MCF 10A (cell line): ENCODE measurements at regions of chr1 and their contacts with region 1.

Region 1: DNA sequence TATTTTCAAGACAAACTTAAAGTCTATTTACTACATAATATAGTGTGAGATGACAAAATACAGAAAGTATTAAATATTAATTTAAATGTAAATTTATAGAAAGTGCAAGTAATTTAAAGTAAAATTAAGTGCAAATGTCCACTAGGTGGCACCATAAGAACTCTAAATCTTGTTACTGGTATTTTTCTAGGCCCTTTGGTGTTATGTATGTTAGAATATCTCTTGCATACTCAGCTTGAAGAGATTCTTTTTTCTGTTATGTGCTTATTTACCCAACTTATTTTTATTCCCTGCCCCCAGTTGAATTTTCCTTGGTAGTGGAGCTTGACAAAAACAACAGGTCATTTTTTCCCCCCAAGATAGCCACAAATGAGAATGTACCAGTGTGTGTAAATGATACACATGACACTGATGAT is 71.5 kb downstream of the RPS6KC1 start:
- DNase-seq: peak; percentile 75
- H3K4me3 Mint-ChIP-seq: no peak overlapping the region
- H3K27ac Mint-ChIP-seq: peak overlapping the region; percentile 61
- H3K4me1 Mint-ChIP-seq: peaks cover 26% of the 10 kb centered on the region
- H3K27me3 Mint-ChIP-seq: no peaks in the 10 kb centered on the region
- CTCF ChIP-seq: peak; percentile 74

Region 2: GRCh38 chr1:213110349-213111300 is 11.9 kb before region 1 on chr1:
- CTCF ChIA-PET with region 1: interaction called, 93 read pairs
- POLR2A ChIA-PET with region 1: interaction called, 4 read pairs
- intact Hi-C with region 1: no loop called
- DNase-seq: no peak
- H3K4me3 Mint-ChIP-seq: no peak overlapping the region
- H3K27ac Mint-ChIP-seq: no peak overlapping the region
- H3K4me1 Mint-ChIP-seq: peaks cover 5% of the 10 kb centered on the region
- H3K27me3 Mint-ChIP-seq: no peaks in the 10 kb centered on the region
- CTCF ChIP-seq: no peak

Region 3: DNA sequence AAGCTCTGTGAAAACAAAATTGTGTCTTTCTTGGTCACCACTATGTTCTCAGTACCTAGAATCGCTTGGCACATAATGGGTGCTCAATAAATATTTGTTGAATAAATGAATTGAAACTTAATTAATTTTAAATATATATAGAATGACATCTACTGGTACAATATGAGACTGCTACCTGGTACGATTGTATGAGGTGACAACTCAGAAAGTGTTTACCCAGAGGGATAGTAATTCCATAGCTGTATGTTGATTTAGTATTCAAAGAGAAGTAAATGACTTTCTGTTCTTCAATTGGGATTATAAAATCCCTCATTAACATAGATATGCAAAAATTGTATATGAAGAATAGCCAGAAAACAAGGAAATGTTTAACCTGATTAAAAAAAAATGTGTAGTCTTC is 57.3 kb after region 1 on chr1:
- CTCF ChIA-PET with region 1: interaction called, 11 read pairs
- POLR2A ChIA-PET with region 1: no interaction called
- intact Hi-C with region 1: no loop called
- DNase-seq: no peak
- H3K4me3 Mint-ChIP-seq: no peak overlapping the region
- H3K27ac Mint-ChIP-seq: no peak overlapping the region
- H3K4me1 Mint-ChIP-seq: no peaks in the 10 kb centered on the region
- H3K27me3 Mint-ChIP-seq: no peaks in the 10 kb centered on the region
- CTCF ChIP-seq: no peak

Region 4: DNA sequence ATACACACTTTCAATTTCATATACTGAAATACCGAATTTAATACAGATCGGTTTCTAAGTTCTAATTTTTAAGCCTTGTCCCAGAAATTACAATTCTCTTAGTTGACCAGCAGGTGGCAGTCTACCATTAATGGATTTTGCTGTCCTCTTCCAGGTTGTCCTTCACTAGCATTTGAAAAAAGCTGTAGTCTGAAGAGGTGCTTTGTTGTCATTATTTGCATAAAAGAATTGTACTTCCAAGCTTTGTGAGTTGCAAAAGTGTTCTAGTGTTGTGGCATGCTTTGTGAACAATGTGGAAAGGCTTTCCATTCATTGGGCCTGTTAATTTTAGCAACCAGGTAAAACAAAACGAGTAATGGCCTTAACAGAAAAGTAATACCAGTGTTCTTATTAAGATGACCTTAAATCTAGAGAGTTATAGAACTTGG is 122.2 kb after region 1 on chr1:
- CTCF ChIA-PET with region 1: interaction called, 18 read pairs
- POLR2A ChIA-PET with region 1: interaction called, 4 read pairs
- intact Hi-C with region 1: loop called (anchors 2 kb)
- DNase-seq: peak; percentile 88
- H3K4me3 Mint-ChIP-seq: no peak overlapping the region
- H3K27ac Mint-ChIP-seq: peak overlapping the region; percentile 17
- H3K4me1 Mint-ChIP-seq: no peaks in the 10 kb centered on the region
- H3K27me3 Mint-ChIP-seq: no peaks in the 10 kb centered on the region
- CTCF ChIP-seq: peak; percentile 97

Region 5: DNA sequence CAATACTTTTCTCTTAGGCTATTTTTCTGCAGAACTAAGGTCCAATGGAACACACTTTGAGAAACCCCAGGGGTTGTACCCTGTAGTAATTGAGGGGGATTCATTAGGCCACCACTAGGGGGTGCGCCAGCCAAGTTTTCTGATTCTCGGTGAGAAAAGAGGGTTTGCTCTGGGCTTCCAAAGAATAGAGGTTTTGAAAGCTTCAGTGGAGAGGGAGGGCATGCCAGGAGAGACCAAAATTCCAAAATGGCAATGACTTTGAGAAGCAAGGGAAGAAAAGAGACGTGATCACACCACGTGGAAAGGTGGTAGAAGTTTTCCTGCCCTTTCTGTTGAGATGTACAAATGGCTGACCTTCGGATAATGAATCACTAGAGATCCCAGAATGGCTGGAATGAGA is 251.8 kb after region 1 on chr1:
- CTCF ChIA-PET with region 1: interaction called, 24 read pairs
- POLR2A ChIA-PET with region 1: no interaction called
- intact Hi-C with region 1: loop called (anchors 1 kb)
- DNase-seq: peak; percentile 90
- H3K4me3 Mint-ChIP-seq: no peak overlapping the region
- H3K27ac Mint-ChIP-seq: no peak overlapping the region
- H3K4me1 Mint-ChIP-seq: peaks cover 4% of the 10 kb centered on the region
- H3K27me3 Mint-ChIP-seq: no peaks in the 10 kb centered on the region
- CTCF ChIP-seq: peak; percentile 99